KBM-7 (cell line): ENCODE measurements at regions of chr12 and their contacts with region 1.

Region 1: GRCh38 chr12:101939856-101940265 is 62.5 kb downstream of the DRAM1 start:
- DNase-seq: peak; percentile 82

Region 2: DNA sequence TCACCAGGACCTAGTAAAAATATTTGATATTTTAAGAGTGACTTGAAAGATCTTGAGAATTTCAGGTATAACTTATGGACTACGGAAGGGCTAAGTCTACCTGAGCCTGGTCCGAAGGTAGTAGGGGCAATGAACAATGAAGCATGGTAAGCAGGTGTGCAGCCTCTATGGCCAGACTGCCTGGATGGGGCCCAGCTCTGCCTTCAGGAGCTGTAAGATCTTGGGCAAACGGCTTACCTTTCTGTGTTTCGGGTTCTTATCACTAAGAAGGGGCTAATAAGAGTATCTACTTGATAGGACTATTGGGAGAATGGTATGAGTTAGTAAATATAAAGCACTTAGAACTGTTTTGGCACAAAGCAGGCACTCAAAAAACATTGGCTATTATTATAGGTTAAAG is 141.0 kb after region 1 on chr12:
- in situ Hi-C with region 1: no loop called
- DNase-seq: no peak

Region 3: GRCh38 chr12:102484428-102484958 is 544.6 kb after region 1 on chr12:
- in situ Hi-C with region 1: loop called (anchors 25 kb)
- DNase-seq: peak; percentile 65